ENCODE measurements at regions of chr5 and their contacts with region 1.

Region 1: DNA sequence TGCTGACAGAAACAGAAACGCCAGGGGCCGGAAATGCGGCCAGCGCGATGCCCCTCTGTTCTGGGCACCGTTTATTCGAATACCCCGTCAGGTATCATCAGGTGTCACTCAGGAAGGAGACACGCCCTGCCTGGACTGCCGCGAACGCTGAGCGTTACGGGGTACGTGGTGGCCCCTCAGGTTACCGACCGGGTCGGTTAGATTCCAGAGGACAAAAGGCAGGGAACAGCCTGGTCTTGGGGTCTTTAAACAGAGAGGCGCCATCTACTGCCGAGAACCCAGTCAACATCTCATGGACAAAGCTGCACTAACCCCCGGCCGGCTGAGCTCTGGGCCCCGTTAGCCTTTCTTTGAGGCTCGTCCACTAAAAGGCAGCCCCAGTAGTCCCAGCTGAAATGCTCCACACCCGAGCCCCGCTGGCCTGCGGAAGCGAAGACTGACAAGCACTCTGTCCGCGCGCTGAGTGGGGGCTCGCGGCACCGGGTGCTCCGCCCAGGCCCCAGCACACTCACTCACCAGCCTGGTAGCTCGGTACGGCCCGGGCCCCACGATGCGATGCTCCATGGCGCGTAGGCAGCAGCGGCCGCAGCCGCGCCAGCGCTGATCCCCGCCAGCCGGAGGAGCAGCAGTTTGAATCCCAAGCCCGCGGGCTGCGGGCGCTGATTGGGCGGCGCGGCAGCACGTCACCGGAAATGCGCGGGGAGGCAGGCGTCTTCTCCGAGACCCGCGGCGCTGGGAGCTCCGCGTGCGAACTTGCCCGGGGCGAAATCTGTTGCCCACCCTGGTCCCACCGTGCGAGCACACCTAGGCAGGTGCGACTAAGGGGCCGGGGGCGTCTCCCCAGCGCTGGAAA is at the start of gene DEPDC1B:
- DNase-seq: peak; percentile 65
- H3K4me3 ChIP-seq: peak within 1 kb of the TSS; percentile 83
- H3K27ac ChIP-seq: peak within 1 kb of the TSS; percentile 91
- H3K27me3 ChIP-seq: peaks cover 5% of the 10 kb centered on the region
- CTCF ChIP-seq: peak; percentile 58
- polyA plus RNA-seq, gene DEPDC1B: 2.9 and 5.4 TPM in 2 replicates

Region 2: GRCh38 chr5:60677844-60678664 is 21.7 kb before region 1 on chr5:
- CTCF ChIA-PET with region 1: interaction called, 44 read pairs
- POLR2A ChIA-PET with region 1: no interaction called
- DNase-seq: no peak
- H3K4me3 ChIP-seq: no peak overlapping the region
- H3K27ac ChIP-seq: no peak overlapping the region
- H3K27me3 ChIP-seq: no peaks in the 10 kb centered on the region
- CTCF ChIP-seq: peak; percentile 67

Region 3: GRCh38 chr5:60687927-60688720 is 11.6 kb before region 1 on chr5:
- CTCF ChIA-PET with region 1: interaction called, 83 read pairs
- POLR2A ChIA-PET with region 1: interaction called, 5 read pairs
- DNase-seq: peak; percentile 34
- H3K4me3 ChIP-seq: no peak overlapping the region
- H3K27ac ChIP-seq: no peak overlapping the region
- H3K27me3 ChIP-seq: no peaks in the 10 kb centered on the region
- CTCF ChIP-seq: peak; percentile 65

Region 4: DNA sequence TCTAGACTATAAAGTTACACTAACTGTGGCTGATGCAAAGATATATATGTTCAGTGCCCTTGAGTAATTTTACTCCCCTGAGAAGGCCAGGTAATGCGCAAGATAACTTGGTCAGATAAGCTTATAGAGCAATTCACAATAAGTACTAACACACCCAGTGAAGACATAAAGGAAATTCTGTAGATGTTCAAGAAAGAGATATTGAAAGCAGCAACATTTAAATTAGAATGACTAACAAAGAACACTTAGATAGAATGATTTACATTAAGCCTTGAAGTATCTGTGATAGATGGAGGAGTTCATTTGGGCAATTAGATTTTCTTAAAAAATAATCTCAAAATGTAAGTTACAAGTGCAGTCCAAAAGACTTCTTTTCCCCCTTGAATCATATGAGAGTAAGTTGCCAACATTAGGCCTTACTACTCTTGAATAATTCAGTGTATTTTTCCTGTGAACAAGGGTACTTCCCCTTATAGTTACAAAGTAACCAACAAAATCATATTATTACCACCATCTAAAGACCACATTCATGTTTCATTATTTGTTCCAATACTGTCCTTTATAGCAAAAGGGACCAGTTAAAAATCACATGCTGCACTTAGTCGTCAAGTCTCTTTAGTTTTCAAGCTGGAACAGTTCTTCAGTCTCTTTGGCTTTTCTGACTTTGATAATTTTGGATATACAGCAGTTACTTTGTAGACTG is 188.8 kb after region 1 on chr5:
- CTCF ChIA-PET with region 1: no interaction called
- POLR2A ChIA-PET with region 1: no interaction called
- DNase-seq: no peak
- H3K4me3 ChIP-seq: no peak overlapping the region
- H3K27ac ChIP-seq: no peak overlapping the region
- H3K27me3 ChIP-seq: no peaks in the 10 kb centered on the region
- CTCF ChIP-seq: no peak